CD4-positive, alpha-beta memory T cell (primary cell): ENCODE measurements at regions of chr16 and their contacts with region 1.

Region 1: DNA sequence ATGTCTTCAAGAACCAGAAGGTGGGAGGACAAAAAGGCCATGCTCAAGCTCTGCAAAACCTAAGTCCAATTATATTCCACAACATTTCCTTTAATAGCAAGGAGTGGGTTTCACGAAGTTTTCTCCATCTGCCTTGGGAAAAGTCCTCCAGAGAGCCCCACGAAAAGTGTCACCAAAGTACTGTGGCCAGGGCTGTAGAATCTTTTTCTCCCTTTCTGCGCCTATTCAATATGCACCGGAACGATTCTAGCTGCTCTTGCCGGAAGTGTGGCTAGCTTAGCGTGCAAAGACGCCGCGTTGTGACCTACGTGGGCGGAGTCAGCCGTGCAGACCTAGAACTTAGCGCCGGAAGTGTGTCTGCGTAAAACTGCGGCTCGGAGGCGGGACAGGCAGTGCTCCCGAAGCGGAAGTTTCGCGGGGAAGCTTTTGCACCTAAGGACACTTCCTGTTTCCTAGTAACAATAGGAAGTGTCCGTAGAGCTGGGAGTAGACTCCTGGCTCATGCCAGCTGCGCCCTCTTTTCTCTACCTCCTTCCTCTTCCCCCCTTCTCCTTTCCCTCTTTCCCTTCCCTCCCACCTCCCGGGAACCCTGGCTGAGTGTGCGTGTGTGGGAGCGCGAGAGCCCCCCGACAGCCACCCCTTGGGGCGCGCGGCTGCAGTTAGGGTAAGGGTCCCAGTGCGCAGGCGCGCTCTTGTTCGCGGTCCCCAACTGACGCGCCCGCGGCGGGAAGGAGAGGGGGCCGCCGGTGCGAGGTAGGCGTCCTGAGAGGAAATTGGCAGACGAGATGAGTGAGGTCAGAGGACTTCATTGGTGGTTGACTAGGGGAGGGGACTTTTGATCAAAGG is at the starts of genes ZNF646 and ZNF668:
- DNase-seq: peak; percentile 94 to 99 (median 98)
- H3K4me3 ChIP-seq: peak within 1 kb of the TSS; percentile 81 to 86
- H3K4me3 Mint-ChIP-seq: peak within 1 kb of the TSS; percentile 92 to 99 (median 97)
- H3K27ac ChIP-seq: peak within 1 kb of the TSS; percentile 87
- H3K27ac Mint-ChIP-seq: peak within 1 kb of the TSS; percentile 93 to 99 (median 98)
- H3K4me1 ChIP-seq: peaks cover 27% of the 10 kb centered on the region
- H3K4me1 Mint-ChIP-seq: peaks cover 20 to 58% (median 30%) of the 10 kb centered on the region in 4 donors
- H3K27me3 ChIP-seq: no peaks in the 10 kb centered on the region
- H3K27me3 Mint-ChIP-seq: peaks cover 0 to 2% of the 10 kb centered on the region in 2 donors
- total RNA-seq, gene ZNF646: 46.9 to 47.0 TPM
- total RNA-seq, gene ZNF668: 11.7 to 13.6 TPM

Region 2: GRCh38 chr16:30957456-30958174 is 116.6 kb before region 1 on chr16 and contains the start of gene SETD1A:
- CTCF ChIA-PET with region 1: no interaction called
- POLR2A ChIA-PET with region 1: interaction called, 16 read pairs
- intact Hi-C with region 1: loop called (anchors 1 kb)
- DNase-seq: peak; percentile 97 to 98 (median 98)
- H3K4me3 ChIP-seq: peak within 1 kb of the TSS; percentile 85 to 95
- H3K4me3 Mint-ChIP-seq: peak within 1 kb of the TSS; percentile 95 to 99 (median 96)
- H3K27ac ChIP-seq: peak within 1 kb of the TSS; percentile 92
- H3K27ac Mint-ChIP-seq: peak within 1 kb of the TSS; percentile 98 to 100 (median 99)
- H3K4me1 ChIP-seq: peaks cover 30% of the 10 kb centered on the region
- H3K4me1 Mint-ChIP-seq: peaks cover 13 to 43% (median 31%) of the 10 kb centered on the region in 4 donors
- H3K27me3 ChIP-seq: no peaks in the 10 kb centered on the region
- H3K27me3 Mint-ChIP-seq: peaks cover 0 to 4% of the 10 kb centered on the region in 2 donors
- total RNA-seq, gene SETD1A: 32.1 to 33.2 TPM

Region 3: DNA sequence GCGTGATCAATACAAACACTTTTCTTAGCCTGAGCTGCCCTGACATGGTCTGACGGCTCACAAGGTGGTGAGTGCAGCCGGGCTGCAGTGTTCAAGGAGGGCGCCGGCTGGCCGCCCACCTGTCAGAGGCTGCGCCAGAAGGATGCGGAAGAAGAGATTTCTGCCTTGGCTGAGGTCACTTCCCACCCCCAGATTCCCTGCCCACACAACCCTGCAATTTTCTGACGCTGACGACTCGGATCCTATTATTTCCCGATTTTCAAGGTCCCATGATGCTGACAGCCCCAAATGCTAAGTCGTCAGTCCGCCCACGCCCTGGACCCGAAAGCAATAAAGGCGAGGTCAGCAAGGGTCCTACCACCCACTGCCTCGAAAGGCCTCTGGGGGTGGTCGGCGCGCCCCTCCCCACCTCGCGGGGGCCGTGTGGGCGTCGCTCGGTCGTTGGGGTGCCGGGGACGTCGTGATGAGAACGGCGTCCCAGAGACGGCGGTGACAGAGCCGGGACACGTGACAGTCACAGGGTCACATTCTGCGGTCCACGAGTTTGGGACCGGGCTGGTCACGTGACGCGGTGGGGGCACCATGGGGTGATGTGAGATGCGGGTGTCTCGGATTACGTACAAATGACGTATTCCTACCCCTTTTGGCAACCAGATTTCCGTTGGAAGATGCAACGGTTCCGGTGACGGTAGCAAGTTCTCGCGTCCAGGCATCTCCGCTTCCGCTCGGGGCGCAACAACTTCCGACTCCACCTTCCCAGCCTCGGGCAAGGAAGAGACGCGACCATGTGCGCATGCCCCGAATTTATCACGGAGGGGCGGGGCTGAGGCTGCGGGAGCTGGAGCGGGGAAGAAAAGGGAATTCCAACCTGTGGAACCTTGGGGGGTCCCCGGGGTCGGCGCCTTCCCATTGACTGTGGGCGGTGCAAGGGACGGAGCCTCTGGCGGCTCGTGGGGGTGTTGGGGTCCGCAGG is 41.2 kb before region 1 on chr16 and contains the start of gene STX4:
- CTCF ChIA-PET with region 1: no interaction called
- POLR2A ChIA-PET with region 1: interaction called, 74 read pairs
- intact Hi-C with region 1: loop called (anchors 1 kb)
- DNase-seq: peak; percentile 95 to 100 (median 98)
- H3K4me3 ChIP-seq: peak within 1 kb of the TSS; percentile 83 to 97
- H3K4me3 Mint-ChIP-seq: peak within 1 kb of the TSS; percentile 91 to 98 (median 95)
- H3K27ac ChIP-seq: peak within 1 kb of the TSS; percentile 86
- H3K27ac Mint-ChIP-seq: peak within 1 kb of the TSS; percentile 93 to 98 (median 98)
- H3K4me1 ChIP-seq: peaks cover 24% of the 10 kb centered on the region
- H3K4me1 Mint-ChIP-seq: peaks cover 6 to 38% (median 22%) of the 10 kb centered on the region in 4 donors
- H3K27me3 ChIP-seq: no peaks in the 10 kb centered on the region
- H3K27me3 Mint-ChIP-seq: no peaks in the 10 kb centered on the region
- total RNA-seq, gene STX4: 106 to 111 TPM

Region 4: DNA sequence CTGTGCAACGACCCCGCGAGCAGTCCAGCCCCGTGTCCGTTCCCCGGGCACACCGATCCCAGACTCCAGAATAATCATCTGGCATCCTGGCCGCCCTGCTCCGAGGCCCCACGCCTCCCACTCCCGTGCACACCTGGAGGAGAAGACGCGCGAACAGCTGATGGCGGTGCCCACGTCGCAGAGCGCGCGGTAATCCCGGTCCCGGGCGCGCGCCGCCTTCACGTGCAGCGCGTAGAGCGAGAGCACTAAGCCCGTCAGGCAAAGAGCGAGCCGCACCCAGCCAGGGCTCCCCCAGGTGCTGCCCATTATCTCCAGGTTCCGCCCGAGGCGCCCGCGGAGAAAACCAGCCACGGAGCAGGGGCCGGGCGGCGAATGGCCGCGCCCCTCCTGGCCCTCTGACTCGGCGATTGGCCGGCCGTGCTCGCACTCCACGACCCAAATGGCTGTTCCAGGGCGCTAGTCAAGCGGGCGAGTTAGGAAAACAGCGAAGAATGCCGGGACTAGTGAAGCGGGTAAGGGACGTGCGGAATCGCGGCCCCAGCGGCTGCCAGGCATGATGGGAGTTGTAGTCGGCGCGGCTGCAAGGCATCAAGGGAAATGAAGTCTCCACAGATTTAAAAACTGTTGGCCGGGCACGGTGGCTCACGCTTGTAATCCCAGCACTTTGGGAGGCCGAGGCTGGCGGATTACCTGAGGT is 20.4 kb after region 1 on chr16 and contains the start of gene VKORC1:
- CTCF ChIA-PET with region 1: no interaction called
- POLR2A ChIA-PET with region 1: interaction called, 61 read pairs
- intact Hi-C with region 1: loop called (anchors 1 kb)
- DNase-seq: peak; percentile 87 to 92 (median 90)
- H3K4me3 ChIP-seq: peak within 1 kb of the TSS; percentile 63 to 98
- H3K4me3 Mint-ChIP-seq: peak within 1 kb of the TSS; percentile 88 to 96 (median 92)
- H3K27ac ChIP-seq: peak within 1 kb of the TSS; percentile 74
- H3K27ac Mint-ChIP-seq: peak within 1 kb of the TSS; percentile 76 to 99 (median 95)
- H3K4me1 ChIP-seq: peaks cover 22% of the 10 kb centered on the region
- H3K4me1 Mint-ChIP-seq: peaks cover 12 to 42% (median 30%) of the 10 kb centered on the region in 4 donors
- H3K27me3 ChIP-seq: no peaks in the 10 kb centered on the region
- H3K27me3 Mint-ChIP-seq: no peaks in the 10 kb centered on the region
- total RNA-seq, gene VKORC1: 48.9 to 51.3 TPM

Region 5: GRCh38 chr16:31134625-31135547 is 60.7 kb after region 1 on chr16:
- CTCF ChIA-PET with region 1: no interaction called
- POLR2A ChIA-PET with region 1: no interaction called
- intact Hi-C with region 1: no loop called
- DNase-seq: no peak
- H3K4me3 ChIP-seq: no peak overlapping the region
- H3K4me3 Mint-ChIP-seq: no peak overlapping the region
- H3K27ac ChIP-seq: no peak overlapping the region
- H3K27ac Mint-ChIP-seq: no peak overlapping the region
- H3K4me1 ChIP-seq: no peaks in the 10 kb centered on the region
- H3K4me1 Mint-ChIP-seq: peaks cover 0 to 3% (median 0%) of the 10 kb centered on the region in 4 donors
- H3K27me3 ChIP-seq: no peaks in the 10 kb centered on the region
- H3K27me3 Mint-ChIP-seq: no peaks in the 10 kb centered on the region

Region 6: DNA sequence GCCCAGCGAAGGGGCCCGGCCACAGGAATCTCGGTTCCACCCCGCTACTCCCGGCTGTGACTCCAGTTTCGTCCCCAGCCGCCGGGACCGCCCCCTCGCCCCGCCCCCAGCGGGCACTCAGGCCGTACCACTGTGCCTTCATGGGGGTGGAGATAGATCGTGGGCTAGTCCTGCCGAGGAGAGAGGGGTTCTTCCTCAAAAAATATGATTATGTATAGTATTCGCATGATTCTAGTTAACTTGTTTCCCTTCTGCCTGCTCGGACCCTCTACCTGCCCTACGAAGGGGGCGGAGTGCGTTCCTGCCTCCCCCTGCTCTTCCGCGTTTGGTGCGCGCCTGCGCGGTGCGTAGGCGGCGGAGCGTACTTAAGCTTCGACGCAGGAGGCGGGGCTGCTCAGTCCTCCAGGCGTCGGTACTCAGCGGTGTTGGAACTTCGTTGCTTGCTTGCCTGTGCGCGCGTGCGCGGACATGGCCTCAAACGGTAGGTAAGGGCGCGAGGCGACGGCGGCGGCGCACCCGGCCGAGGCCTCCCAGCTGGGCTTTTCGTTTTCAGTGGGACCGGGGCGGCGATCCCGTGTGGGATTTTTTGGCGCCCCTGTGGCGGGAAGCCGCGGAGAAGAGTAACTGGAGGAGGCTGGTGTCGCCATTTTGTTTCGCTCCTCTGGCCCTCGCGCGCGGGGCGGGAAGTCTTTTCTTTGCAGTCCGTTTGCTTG is 105.7 kb after region 1 on chr16 and contains the start of gene FUS:
- CTCF ChIA-PET with region 1: no interaction called
- POLR2A ChIA-PET with region 1: interaction called, 61 read pairs
- intact Hi-C with region 1: loop called (anchors 1 kb)
- DNase-seq: peak; percentile 89 to 95 (median 94)
- H3K4me3 ChIP-seq: peak within 1 kb of the TSS; percentile 96 to 97
- H3K4me3 Mint-ChIP-seq: peak within 1 kb of the TSS; percentile 97 to 99 (median 98)
- H3K27ac ChIP-seq: peak within 1 kb of the TSS; percentile 89
- H3K27ac Mint-ChIP-seq: peak within 1 kb of the TSS; percentile 95 to 100 (median 99)
- H3K4me1 ChIP-seq: peaks cover 66% of the 10 kb centered on the region
- H3K4me1 Mint-ChIP-seq: peaks cover 41 to 77% (median 54%) of the 10 kb centered on the region in 4 donors
- H3K27me3 ChIP-seq: no peaks in the 10 kb centered on the region
- H3K27me3 Mint-ChIP-seq: no peaks in the 10 kb centered on the region
- total RNA-seq, gene FUS: 500 to 536 TPM

Region 7: GRCh38 chr16:31430380-31431052 is 356.3 kb after region 1 on chr16:
- CTCF ChIA-PET with region 1: no interaction called
- POLR2A ChIA-PET with region 1: no interaction called
- intact Hi-C with region 1: no loop called
- DNase-seq: no peak
- H3K4me3 ChIP-seq: no peak overlapping the region
- H3K4me3 Mint-ChIP-seq: no peak overlapping the region
- H3K27ac ChIP-seq: no peak overlapping the region
- H3K27ac Mint-ChIP-seq: no peak overlapping the region
- H3K4me1 ChIP-seq: peaks cover 4% of the 10 kb centered on the region
- H3K4me1 Mint-ChIP-seq: peaks cover 0 to 6% (median under 1%) of the 10 kb centered on the region in 4 donors
- H3K27me3 ChIP-seq: no peaks in the 10 kb centered on the region
- H3K27me3 Mint-ChIP-seq: no peaks in the 10 kb centered on the region